Naive thymus-derived CD8-positive, alpha-beta T cell (primary cell): ENCODE measurements at regions of chr1 and their contacts with region 1.

Region 1: GRCh38 chr1:3900119-3900968 is at the start of gene C1orf174:
- DNase-seq: peak; percentile 85 to 99 (median 97)
- ATAC-seq: peak; percentile 85 to 87
- H3K4me3 Mint-ChIP-seq: peak within 1 kb of the TSS; percentile 86 to 97 (median 94)
- H3K27ac Mint-ChIP-seq: peak within 1 kb of the TSS; percentile 91 to 99 (median 98)
- H3K4me1 Mint-ChIP-seq: peaks cover 25 to 80% (median 60%) of the 10 kb centered on the region in 4 donors
- H3K27me3 Mint-ChIP-seq: no peaks in the 10 kb centered on the region
- polyA plus RNA-seq, gene C1orf174: 16.4 to 27.6 (median 17.9) TPM

Region 2: DNA sequence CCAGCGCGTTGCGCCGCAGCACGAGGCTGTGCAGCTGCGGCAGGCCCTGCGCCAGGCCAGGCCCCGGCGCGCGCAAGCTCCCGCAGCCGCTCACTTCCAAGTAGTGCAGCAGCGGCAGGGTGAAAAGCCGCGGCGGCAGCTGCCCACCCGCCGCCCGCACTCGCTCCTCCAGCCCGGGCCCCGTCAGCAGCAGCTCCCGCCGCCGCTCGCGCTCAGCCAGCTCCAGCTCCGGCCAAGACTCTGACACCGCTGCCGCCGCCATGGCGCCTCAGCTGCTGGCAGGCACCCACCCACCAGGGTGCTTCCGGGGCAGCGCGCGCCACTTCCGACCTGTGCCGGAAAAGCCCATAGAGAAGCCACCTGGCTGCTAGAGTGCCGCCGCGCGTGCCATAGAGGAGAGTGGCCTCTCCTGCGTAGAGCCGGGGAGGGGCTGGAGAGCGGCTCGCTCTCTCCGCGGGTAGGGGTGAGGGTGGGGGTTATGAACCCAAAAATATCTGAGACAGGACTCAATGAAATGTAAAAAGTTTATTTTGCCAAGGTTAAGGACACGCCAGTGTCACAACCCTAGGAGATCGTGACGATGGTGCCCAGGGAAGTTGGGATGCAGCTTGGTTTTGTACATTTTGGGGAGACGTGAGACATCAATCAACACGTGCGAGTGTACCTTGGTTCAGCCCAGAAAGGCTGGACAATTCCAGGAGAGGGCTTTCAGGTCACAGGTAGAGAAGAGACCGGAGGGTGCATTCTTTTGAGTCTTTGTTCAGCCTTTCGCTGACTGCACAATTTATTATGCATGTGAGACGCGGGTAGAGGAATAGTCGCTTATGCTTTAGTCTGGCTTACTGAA is 103.9 kb before region 1 on chr1 and contains the start of gene LRRC47:
- POLR2A ChIA-PET with region 1: interaction called, 15 read pairs
- DNase-seq: peak; percentile 90 to 96 (median 93)
- ATAC-seq: peak; percentile 100
- H3K4me3 Mint-ChIP-seq: peak within 1 kb of the TSS; percentile 84 to 98 (median 96)
- H3K27ac Mint-ChIP-seq: peak within 1 kb of the TSS; percentile 86 to 99 (median 96)
- H3K4me1 Mint-ChIP-seq: peaks cover 18 to 54% (median 45%) of the 10 kb centered on the region in 4 donors
- H3K27me3 Mint-ChIP-seq: peaks cover 7 to 20% (median 11%) of the 10 kb centered on the region in 5 donors
- polyA plus RNA-seq, gene LRRC47: 23.9 to 34.9 (median 34.6) TPM

Region 3: GRCh38 chr1:3856908-3857790 is 43.2 kb before region 1 on chr1 and contains the starts of genes CEP104 and DFFB:
- POLR2A ChIA-PET with region 1: interaction called, 62 read pairs
- DNase-seq: peak; percentile 96 to 99 (median 98)
- ATAC-seq: peak; percentile 97 to 98
- H3K4me3 Mint-ChIP-seq: peak within 1 kb of the TSS; percentile 94 to 100 (median 97)
- H3K27ac Mint-ChIP-seq: peak within 1 kb of the TSS; percentile 89 to 97 (median 95)
- H3K4me1 Mint-ChIP-seq: peaks cover 15 to 59% (median 41%) of the 10 kb centered on the region in 4 donors
- H3K27me3 Mint-ChIP-seq: no peaks in the 10 kb centered on the region
- polyA plus RNA-seq, gene CEP104: 13.1 to 19.4 (median 18.4) TPM
- polyA plus RNA-seq, gene DFFB: 8.5 to 12.5 (median 9.8) TPM

Region 4: DNA sequence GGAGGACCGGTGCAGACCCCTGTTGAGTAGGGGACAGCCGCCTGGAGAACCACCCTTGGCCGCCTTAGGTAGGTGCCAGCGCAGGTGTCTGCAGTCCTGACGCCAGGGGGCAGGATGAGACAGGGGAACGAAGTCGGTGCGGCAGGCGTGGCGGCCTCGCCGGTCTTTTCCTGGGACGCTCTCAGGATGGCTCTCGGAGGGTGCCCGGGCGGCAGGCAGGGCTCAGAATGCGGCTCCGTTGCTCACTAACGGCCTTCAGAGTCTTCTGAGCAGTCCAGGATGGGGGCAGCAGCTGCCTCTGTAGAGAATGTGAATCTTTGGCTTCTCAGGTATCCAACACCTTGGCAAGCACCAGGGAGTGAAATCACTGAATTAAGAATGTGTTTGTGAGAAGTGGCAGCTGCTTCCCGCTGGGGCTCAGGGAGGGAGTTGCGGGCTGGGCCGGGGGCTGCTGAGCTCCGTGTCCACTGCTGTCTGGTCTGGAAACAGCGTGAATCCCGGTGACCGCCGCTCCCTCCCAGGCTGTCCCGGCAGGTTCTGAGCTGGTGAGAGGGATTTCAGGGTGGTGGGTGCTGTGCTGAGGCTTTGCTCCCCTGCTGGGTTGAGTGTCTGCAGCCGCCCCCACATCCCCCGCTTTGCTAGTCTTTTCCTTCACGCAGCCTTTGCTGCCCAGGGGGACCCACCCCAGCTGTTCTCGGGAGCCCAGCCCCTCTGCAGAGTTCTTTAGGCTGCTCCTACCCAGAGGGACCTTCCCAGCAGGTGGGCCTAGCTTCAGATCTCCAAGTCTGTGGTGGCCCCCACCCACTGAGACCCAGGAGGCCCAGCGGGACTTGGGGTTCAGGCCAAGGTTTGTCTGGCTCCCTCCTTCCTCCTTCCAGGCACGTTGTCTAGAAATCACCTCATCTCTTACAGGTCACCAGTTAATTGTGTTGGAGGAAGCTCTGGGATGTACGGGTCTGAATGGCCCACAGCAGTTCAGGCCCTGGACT is 10.8 kb after region 1 on chr1:
- POLR2A ChIA-PET with region 1: no interaction called
- DNase-seq: peak; percentile 60 to 86 (median 73)
- ATAC-seq: peak; percentile 93 to 94
- H3K4me3 Mint-ChIP-seq: peak overlapping the region in 7 of 10 donors; percentile 8 to 58 (median 39)
- H3K27ac Mint-ChIP-seq: peak overlapping the region in 1 of 10 donors; percentile 40
- H3K4me1 Mint-ChIP-seq: peaks cover 0 to 12% (median 5%) of the 10 kb centered on the region in 4 donors
- H3K27me3 Mint-ChIP-seq: peaks cover 0 to 2% (median 0%) of the 10 kb centered on the region in 5 donors